Heart left ventricle (tissue), 16 donors: ENCODE measurements at regions of chr2 and their contacts with region 1.

Region 1: DNA sequence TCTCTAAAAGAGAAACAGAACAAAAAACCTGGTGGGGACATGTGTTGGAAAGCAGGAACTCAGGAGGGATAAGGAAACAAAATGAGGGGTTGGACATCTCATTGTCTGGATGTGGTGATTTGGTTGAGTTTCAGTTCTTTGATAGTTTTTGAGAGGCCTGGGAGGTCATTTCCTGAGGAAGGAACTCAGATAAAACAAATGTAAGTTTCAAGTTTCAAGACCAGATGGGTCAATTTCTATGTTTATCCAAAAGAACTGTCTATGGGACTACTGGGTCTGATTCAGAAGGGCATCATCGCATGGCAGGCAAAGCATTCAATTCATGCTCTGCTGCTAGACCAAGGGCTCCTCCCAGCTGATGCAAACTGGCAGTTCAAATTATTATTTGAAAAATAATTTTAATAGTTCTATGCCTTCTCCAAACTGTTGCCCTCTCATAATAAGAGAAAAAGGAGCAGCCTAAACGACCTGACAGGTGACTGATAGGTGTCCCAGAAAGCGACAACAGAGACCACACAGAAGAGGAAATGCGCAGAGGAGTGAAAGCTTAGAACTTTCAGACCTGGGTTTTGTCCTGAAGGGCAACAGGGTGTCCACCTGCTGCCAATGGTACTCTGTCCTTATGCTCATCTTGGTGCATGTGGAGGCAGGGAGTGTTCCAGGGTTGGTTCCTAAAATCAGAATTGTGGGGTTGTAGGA is 39.3 kb upstream of the SH3RF3 start:
- DNase-seq: no peak
- ATAC-seq: no peak
- H3K4me3 ChIP-seq: no peak overlapping the region
- H3K27ac ChIP-seq: no peak overlapping the region
- H3K4me1 ChIP-seq: no peaks in the 10 kb centered on the region
- H3K27me3 ChIP-seq: no peaks in the 10 kb centered on the region
- CTCF ChIP-seq: no peak
- POLR2A ChIP-seq: no peak

Region 2: GRCh38 chr2:108884619-108885018 is 205.1 kb before region 1 on chr2:
- intact Hi-C with region 1: no loop called
- DNase-seq: no peak
- ATAC-seq: no peak
- H3K4me3 ChIP-seq: no peak overlapping the region
- H3K27ac ChIP-seq: no peak overlapping the region
- H3K4me1 ChIP-seq: no peaks in the 10 kb centered on the region
- H3K27me3 ChIP-seq: no peaks in the 10 kb centered on the region
- CTCF ChIP-seq: no peak
- POLR2A ChIP-seq: no peak

Region 3: DNA sequence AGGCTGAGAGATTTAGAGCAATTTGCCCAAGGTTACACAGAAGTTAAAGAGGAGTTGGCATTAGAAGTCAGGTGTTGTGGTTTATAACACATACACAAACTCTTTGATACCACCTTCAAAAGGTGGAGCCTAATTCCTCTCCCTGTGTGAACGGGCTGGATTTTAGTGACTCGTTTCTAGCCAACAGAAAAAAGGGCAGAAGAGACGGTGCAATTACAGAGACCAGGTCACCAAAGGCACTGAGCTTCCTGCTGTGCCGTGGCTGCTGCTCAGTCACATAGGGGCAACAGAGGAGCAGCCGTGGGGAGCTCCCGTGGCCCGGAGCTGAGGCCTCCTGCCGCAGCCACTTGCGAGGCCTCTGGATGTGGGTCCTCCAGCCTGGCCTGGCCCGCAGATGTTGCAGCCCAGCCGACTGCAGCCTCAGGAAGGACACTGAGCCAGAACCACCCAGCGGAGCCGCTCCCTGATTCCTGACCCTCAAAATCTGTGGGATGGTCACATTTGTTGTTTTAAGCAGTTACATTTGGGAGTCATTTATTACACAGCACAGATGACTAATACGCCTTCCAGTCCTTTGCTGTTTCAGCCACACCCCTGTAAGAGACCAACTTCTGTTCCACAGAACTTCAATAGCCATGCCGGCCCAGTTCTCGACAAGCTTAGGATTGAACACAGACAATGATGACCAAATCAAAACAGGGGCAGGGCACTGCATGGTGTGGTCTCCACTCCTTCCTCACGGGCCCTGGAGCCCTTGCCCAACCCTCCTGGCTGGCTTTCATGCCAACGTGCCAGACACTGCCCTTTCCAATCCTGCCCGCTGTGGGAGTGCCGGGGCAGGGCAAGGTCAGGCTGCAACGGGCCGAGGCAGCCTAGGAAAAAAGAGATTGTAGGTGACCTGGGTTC is 117.8 kb before region 1 on chr2:
- intact Hi-C with region 1: no loop called
- DNase-seq: peak in 2 of 5 donors; percentile 37 to 65
- ATAC-seq: peak in 3 of 4 donors; percentile 48 to 88 (median 65)
- H3K4me3 ChIP-seq: no peak overlapping the region
- H3K27ac ChIP-seq: no peak overlapping the region
- H3K4me1 ChIP-seq: no peaks in the 10 kb centered on the region
- H3K27me3 ChIP-seq: no peaks in the 10 kb centered on the region
- CTCF ChIP-seq: no peak
- POLR2A ChIP-seq: no peak

Region 4: DNA sequence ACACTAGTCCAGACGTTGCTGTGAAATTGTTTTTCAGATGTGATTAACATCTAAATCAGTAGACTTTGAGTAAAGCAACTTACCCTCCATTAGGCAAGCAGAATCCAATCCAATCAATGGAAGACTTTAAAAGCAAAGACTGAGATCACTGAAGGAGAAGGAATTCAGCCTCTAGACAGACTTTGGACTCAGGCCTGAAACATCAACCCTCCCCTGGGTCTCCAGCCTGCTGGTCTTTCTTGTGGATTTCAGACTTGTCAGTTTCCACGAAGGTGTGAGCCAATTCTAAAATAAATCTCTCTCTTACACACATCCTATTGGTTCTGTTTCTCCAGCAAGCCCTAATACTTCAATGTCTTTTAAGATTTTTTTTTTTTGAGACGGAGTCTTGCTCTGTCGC is 50.8 kb before region 1 on chr2:
- intact Hi-C with region 1: loop called in 1 of 10 experiments (anchors 5 kb)
- DNase-seq: no peak
- ATAC-seq: no peak
- H3K4me3 ChIP-seq: no peak overlapping the region
- H3K27ac ChIP-seq: no peak overlapping the region
- H3K4me1 ChIP-seq: no peaks in the 10 kb centered on the region
- H3K27me3 ChIP-seq: no peaks in the 10 kb centered on the region
- CTCF ChIP-seq: no peak
- POLR2A ChIP-seq: no peak